ENCODE measurements at regions of chr17 and their contacts with region 1.

Region 1: DNA sequence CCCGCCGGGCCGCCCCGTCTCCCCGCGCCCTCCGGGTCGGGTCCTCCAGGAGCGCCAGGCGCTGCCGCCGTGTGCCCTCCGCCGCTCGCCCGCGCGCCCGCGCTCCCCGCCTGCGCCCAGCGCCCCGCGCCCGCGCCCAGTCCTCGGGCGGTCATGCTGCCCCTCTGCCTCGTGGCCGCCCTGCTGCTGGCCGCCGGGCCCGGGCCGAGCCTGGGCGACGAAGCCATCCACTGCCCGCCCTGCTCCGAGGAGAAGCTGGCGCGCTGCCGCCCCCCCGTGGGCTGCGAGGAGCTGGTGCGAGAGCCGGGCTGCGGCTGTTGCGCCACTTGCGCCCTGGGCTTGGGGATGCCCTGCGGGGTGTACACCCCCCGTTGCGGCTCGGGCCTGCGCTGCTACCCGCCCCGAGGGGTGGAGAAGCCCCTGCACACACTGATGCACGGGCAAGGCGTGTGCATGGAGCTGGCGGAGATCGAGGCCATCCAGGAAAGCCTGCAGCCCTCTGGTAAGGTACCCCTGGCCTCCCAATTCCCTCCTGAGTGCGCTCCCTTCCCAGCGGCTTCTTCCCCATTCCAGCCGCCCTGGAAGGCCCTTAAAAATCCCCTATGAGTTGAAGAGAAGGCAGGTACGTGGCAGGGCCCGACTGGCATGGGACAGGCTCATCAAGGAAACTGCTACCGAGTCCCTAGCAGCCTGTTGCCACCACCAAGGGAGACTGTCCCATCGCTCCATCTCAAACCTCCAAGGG is 505 bp downstream of the IGFBP4 start:
- DNase-seq: no peak
- ATAC-seq: peak; percentile 84
- H3K4me3 ChIP-seq: peak overlapping the region; percentile 61
- H3K27ac ChIP-seq: no peak overlapping the region
- H3K4me1 ChIP-seq: peaks cover 19% of the 10 kb centered on the region
- H3K27me3 ChIP-seq: peaks cover 0 to 16% of the 10 kb centered on the region in 2 experiments; a peak in 1 of 4 replicates
- CTCF ChIP-seq: peak; percentile 46 to 72 (median 71)
- EP300 ChIP-seq: no peak
- POLR2A ChIP-seq: no peak
- RAD21 ChIP-seq: peak; percentile 33; the same call in 1 of the 2 replicates

Region 2: DNA sequence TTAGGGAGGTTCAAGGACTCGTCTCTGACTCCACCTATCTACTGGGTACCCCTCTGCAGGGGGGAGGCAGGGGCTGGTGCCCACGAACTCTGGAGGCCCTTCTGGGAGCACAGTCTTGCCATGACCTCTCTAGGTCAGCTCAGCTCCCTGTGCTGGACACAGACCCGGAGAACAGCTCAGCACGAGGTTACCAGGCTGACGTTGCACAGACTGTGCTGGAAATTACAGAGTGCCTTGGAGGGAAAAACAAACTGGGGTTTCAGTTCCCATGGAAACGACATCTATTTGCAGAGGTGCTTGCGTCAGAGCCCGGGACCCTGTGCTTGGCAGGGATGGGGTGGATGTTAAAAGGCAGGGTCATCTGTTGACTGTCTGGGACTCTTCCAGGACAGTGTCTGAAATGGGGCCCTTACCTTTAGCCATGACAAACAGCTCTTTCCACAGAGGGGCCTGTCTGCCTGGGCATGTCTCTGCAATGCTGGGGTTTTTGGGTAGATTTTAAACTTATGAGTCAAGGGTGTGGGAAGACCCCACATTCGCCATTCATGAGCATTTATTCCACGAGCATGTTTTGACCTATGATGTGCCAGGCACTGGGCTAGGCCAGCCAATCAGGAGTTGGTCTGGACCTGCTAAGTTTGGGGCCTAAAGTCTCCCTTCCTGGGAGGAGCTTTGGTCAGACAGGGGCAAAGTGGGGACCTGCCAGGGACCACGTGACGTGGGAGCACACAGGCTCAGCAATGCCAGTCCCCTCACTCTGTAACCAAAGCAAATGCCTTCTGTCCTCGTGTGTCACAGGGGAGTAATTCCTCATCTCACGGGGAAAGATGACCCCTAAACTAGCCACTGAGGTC is 99.0 kb after region 1 on chr17:
- CTCF ChIA-PET with region 1: interaction called, 289 read pairs
- POLR2A ChIA-PET with region 1: no interaction called
- RAD21 ChIA-PET with region 1: interaction called, 4 read pairs
- SMC1A ChIA-PET with region 1: no interaction called
- in situ Hi-C with region 1: loop called (anchors 25 kb)
- intact Hi-C with region 1: no loop called
- DNase-seq: no peak
- ATAC-seq: peak; percentile 67
- H3K4me3 ChIP-seq: no peak overlapping the region
- H3K27ac ChIP-seq: peak overlapping the region; percentile 30
- H3K4me1 ChIP-seq: peaks cover 56% of the 10 kb centered on the region
- H3K27me3 ChIP-seq: no peaks in the 10 kb centered on the region; a peak in 1 of 4 replicates
- CTCF ChIP-seq: no peak
- EP300 ChIP-seq: peak; percentile 33 to 73; a peak in 3 of 4 replicates
- POLR2A ChIP-seq: peak; percentile 40; the same call in 1 of the 2 replicates
- RAD21 ChIP-seq: no peak